ENCODE measurements at regions of chr12 and their contacts with region 1.

Region 1: GRCh38 chr12:74801625-74802024 is 264.0 kb downstream of the ATXN7L3B start:
- DNase-seq: no peak
- H3K4me3 ChIP-seq: no peak overlapping the region
- H3K27ac ChIP-seq: no peak overlapping the region
- H3K4me1 ChIP-seq: no peaks in the 10 kb centered on the region
- H3K27me3 ChIP-seq: no peaks in the 10 kb centered on the region
- CTCF ChIP-seq: no peak

Region 2: GRCh38 chr12:74890237-74890599 is 88.6 kb after region 1 on chr12:
- CTCF ChIA-PET with region 1: no interaction called
- POLR2A ChIA-PET with region 1: no interaction called
- intact Hi-C with region 1: no loop called
- DNase-seq: peak; percentile 37 to 86
- H3K4me3 ChIP-seq: no peak overlapping the region
- H3K27ac ChIP-seq: peak overlapping the region; percentile 77
- H3K4me1 ChIP-seq: peaks cover 30% of the 10 kb centered on the region
- H3K27me3 ChIP-seq: no peaks in the 10 kb centered on the region
- CTCF ChIP-seq: no peak

Region 3: DNA sequence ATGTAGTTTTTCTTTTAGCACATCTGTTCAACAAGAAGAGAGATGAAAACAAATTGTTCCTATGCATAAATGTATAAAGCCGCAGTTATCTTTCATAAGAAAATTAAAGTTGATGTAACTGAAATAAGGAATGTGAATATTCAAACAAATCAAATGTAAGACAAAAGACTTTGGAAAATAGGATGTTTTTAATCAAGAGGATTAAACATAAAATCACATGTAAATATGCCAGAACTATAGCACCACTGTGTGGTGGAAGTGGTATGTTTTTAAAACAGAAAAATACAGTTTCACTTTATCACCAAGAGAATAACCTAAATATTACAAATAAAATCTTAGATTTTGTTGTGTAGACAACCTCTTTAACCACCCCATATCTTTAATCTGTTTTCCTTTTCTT is 488.1 kb after region 1 on chr12:
- CTCF ChIA-PET with region 1: no interaction called
- POLR2A ChIA-PET with region 1: no interaction called
- intact Hi-C with region 1: loop called (anchors 5 kb)
- DNase-seq: no peak
- H3K4me3 ChIP-seq: no peak overlapping the region
- H3K27ac ChIP-seq: no peak overlapping the region
- H3K4me1 ChIP-seq: no peaks in the 10 kb centered on the region
- H3K27me3 ChIP-seq: no peaks in the 10 kb centered on the region
- CTCF ChIP-seq: peak; percentile 62

Region 4: DNA sequence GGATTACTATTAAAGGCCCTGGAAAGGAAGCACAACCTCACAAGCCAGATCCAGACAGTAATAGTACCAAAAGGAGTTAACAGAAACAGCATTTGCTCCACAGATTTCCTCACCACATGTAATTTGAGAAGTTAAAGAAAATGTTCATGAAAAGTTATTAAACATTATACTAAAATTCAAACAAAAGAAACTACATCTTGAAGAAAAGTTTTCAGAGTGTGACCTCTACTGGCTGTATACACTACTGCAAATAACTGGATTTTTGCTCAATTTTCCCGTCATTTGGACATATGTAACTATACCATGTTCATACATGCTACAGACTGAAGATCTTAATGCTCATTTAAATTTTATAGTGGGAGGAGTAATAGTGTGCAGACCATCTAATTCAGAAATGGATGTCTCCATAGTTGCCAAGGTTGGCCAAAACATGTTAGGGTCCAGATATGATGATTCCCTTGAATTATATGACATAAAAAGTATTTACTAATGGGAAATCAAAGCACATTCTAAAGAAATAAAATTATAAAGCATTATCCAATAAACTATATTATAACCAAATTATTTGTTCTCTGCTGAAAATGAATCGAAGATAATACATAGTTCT is 704.2 kb after region 1 on chr12:
- CTCF ChIA-PET with region 1: interaction called, 4 read pairs
- POLR2A ChIA-PET with region 1: no interaction called
- intact Hi-C with region 1: loop called (anchors 10 kb)
- DNase-seq: no peak
- H3K4me3 ChIP-seq: no peak overlapping the region
- H3K27ac ChIP-seq: no peak overlapping the region
- H3K4me1 ChIP-seq: peaks cover 14% of the 10 kb centered on the region
- H3K27me3 ChIP-seq: no peaks in the 10 kb centered on the region
- CTCF ChIP-seq: peak; percentile 80